Activated CD4-positive, alpha-beta T cell treated with anti-CD3 and anti-CD28 coated beads, Interleukin-2, amount 10 ng/mL, durations not matched to agents 7 days and 5 days (primary cell): ENCODE measurements at regions of chr17 and their contacts with region 1.

Region 1: GRCh38 chr17:42183741-42184711 is 1.2 kb downstream of the HCRT start:
- DNase-seq: peak; percentile 71
- H3K4me3 Mint-ChIP-seq: peak overlapping the region; percentile 87
- H3K27ac Mint-ChIP-seq: peak overlapping the region; percentile 93
- H3K4me1 Mint-ChIP-seq: peaks cover 49% of the 10 kb centered on the region
- H3K27me3 Mint-ChIP-seq: peaks cover 23% of the 10 kb centered on the region

Region 2: DNA sequence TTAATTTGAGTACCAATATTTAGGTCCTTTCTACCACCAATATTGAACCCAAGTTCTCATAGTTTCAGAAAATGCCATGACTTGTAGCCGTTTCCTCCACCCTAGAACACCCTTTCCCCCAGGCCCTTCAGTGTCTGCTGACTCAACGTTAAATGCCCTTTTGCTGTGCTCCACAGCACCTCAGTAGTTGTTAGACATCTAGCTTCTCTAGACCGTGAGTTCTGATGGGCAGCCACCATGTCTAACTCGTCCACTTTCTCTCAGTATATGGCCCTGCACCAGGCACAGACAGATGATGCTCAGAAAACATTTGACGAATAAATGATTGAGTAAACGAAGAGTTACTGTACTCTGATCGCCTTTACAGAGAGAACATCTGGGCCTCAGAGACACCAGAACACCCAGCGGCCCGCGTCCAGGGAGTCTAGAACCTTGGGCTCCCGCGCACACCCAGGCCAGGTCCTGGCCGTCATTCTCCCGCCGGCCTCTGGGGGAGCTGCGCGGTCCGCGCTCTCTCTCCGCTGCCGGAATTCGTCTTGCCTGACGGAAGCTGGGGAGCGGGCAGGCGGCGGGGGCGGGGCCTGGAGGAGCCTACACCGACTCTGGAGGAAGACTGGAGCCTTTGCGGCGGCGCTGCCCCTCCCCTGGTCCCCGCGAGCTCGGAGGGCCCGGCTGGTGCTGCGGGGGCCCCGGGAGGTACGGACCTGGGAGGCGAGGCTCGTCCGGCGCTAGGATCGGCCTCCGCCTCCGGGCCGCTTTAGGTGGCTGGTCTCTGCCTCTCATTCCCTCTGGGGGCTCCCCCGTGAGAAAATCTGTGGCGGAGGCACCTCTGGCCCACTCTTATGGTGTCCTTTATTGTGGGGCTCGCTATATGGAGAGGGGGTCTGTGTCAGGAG is 164.3 kb before region 1 on chr17 and contains the start of gene NKIRAS2:
- CTCF ChIA-PET with region 1: interaction called, 14 read pairs
- POLR2A ChIA-PET with region 1: no interaction called
- DNase-seq: peak; percentile 95
- H3K4me3 Mint-ChIP-seq: peak within 1 kb of the TSS; percentile 99
- H3K27ac Mint-ChIP-seq: peak within 1 kb of the TSS; percentile 90
- H3K4me1 Mint-ChIP-seq: peaks cover 63% of the 10 kb centered on the region
- H3K27me3 Mint-ChIP-seq: no peaks in the 10 kb centered on the region
- total RNA-seq, gene NKIRAS2: 23.3 to 25.5 TPM

Region 3: GRCh38 chr17:42132941-42133340 is 51.1 kb before region 1 on chr17:
- CTCF ChIA-PET with region 1: interaction called, 11 read pairs
- POLR2A ChIA-PET with region 1: no interaction called
- DNase-seq: peak; percentile 26
- H3K4me3 Mint-ChIP-seq: no peak overlapping the region
- H3K27ac Mint-ChIP-seq: peak overlapping the region; percentile 74
- H3K4me1 Mint-ChIP-seq: peaks cover 55% of the 10 kb centered on the region
- H3K27me3 Mint-ChIP-seq: no peaks in the 10 kb centered on the region

Region 4: GRCh38 chr17:42167807-42168206 is 16.2 kb before region 1 on chr17:
- CTCF ChIA-PET with region 1: interaction called, 28 read pairs
- POLR2A ChIA-PET with region 1: no interaction called
- DNase-seq: no peak
- H3K4me3 Mint-ChIP-seq: no peak overlapping the region
- H3K27ac Mint-ChIP-seq: no peak overlapping the region
- H3K4me1 Mint-ChIP-seq: no peaks in the 10 kb centered on the region
- H3K27me3 Mint-ChIP-seq: no peaks in the 10 kb centered on the region

Region 5: DNA sequence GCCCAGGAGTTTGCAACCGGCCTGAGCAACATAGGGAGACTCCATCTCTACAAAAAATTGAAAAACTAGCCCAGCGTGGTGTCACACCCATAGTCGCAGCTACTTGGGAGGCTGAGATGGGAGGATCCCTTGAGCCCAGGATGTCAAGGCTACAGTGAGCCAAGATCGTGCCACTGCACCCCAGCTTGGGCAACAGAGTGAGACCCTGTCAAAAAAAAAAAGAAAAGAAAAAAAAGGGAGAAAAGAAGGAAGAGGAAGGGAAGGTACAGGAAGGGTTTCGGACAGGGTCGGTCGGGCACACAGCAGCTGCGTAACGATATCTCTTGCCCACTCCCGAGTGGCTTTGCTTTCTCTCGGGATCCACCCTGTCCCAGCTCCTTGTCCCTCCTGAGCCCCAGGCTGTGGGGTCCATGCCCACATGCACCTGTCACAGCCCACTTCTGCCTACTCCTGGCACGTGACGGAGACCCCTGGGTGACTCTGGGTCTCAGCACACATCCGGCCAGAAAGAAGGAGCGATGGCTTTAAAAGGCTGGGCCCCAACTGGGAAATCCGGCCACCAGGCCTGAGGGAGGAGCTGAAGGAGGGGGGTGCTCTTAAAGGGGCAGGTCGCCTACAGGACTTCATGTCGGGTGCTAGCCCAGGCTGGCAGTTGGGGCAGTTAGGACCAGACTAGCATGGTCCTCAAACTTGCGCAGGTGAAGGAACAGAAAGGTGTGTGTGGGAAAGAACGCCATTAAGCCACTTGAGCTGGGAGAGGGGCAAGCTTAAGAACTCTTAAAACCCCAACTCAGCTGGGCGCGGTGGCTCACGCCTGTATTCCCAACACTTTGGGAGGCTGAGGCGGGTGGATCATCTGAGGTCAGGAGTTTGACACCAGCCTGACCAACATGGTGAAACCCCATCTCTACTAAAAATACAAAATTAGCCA is 10.2 kb after region 1 on chr17 and contains the start of gene GHDC:
- CTCF ChIA-PET with region 1: interaction called, 33 read pairs
- POLR2A ChIA-PET with region 1: interaction called, 5 read pairs
- DNase-seq: peak; percentile 87
- H3K4me3 Mint-ChIP-seq: peak within 1 kb of the TSS; percentile 83
- H3K27ac Mint-ChIP-seq: peak within 1 kb of the TSS; percentile 93
- H3K4me1 Mint-ChIP-seq: peaks cover 23% of the 10 kb centered on the region
- H3K27me3 Mint-ChIP-seq: no peaks in the 10 kb centered on the region
- total RNA-seq, gene GHDC: 15.3 to 15.5 TPM

Region 6: GRCh38 chr17:42291129-42291528 is 107.1 kb after region 1 on chr17:
- CTCF ChIA-PET with region 1: no interaction called
- POLR2A ChIA-PET with region 1: no interaction called
- DNase-seq: no peak
- H3K4me3 Mint-ChIP-seq: no peak overlapping the region
- H3K27ac Mint-ChIP-seq: no peak overlapping the region
- H3K4me1 Mint-ChIP-seq: peaks cover 53% of the 10 kb centered on the region
- H3K27me3 Mint-ChIP-seq: no peaks in the 10 kb centered on the region